Mammary epithelial cell (primary cell): ENCODE measurements at regions of chr3 and their contacts with region 1.

Region 1: DNA sequence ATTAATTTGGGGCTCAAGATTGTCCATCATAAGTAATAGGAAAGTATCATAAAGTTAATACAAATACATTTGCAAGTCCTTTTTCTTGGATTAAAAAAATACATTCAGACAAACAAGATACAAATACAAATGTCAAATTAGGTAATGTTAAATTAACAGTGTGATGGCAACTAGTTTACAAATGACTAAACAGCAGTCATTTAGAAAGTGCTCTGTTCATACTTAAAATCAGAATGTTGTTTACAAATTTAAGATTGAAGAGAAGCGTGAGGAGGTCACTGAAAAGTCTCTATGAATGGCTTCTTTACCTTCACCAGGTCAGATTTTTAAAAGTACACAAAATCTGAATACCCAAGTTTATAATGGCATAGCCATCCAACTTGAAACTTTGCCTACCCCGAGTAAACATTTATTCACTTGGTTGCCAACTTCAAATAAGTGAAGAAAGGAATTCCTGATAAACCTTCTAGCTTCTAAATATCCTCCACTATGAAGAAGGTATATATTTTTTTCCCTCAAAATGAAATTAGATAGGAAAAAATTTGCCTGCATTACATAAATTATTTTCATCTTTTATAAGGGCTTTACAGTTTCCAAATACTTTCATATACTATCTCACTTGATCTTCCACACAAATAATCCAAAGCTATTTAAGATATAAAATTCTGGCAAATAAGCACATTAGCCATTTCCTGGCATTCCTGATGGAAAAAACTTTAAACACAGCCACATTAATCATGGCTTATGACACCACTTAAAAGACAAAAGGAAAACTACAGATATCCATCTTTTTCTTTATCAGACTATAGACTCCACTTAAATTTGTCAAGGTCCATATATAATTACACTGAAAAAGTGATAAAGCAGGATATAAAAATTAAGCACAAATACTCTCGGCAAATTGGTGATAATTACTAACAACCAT is 11.5 kb upstream of the NEK10 start:
- DNase-seq: no peak
- H3K4me3 ChIP-seq: no peak overlapping the region
- H3K27ac ChIP-seq: no peak overlapping the region
- H3K4me1 ChIP-seq: no peaks in the 10 kb centered on the region
- H3K27me3 ChIP-seq: no peaks in the 10 kb centered on the region
- CTCF ChIP-seq: no peak

Region 2: DNA sequence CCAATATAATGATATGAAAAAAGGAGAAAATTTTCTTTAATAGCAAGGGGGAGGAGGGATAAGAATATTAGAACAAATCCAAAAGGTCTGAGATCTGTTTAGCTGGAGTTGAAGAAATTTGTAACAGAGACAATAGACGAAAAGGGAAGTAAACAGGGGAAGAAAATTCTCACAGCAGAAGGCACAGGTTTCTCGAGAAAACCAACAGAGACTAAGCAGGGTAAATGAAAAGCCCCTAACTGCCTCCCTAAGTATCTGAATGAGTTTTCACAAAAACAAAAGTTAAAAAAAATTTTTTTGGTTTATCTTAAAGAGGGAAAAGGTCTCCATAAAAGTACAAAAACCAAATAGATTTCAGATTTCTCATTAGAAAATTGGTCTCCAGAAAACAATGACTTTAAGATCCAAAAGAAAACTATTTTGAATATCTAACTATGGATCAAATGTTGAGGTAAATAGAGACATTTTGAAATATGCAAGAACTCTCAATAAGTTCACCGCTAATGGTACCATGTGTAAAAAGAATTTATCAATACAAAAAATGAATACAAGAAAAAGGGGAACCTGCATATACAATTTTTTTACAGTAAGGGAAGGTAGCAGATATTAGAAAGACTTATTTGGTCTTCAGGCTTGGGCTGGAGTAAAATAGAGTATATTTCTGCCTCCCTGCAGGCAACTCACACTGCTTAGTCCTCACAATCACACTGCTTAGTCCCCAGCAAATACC is 12.4 kb after region 1 on chr3:
- CTCF ChIA-PET with region 1: no interaction called
- dilution Hi-C with region 1: no loop called
- in situ Hi-C with region 1: no loop called
- intact Hi-C with region 1: no loop called
- DNase-seq: no peak
- H3K4me3 ChIP-seq: no peak overlapping the region
- H3K27ac ChIP-seq: no peak overlapping the region
- H3K4me1 ChIP-seq: no peaks in the 10 kb centered on the region
- H3K27me3 ChIP-seq: no peaks in the 10 kb centered on the region
- CTCF ChIP-seq: no peak

Region 3: GRCh38 chr3:27415202-27415601 is 34.5 kb after region 1 on chr3:
- CTCF ChIA-PET with region 1: no interaction called
- dilution Hi-C with region 1: no loop called
- in situ Hi-C with region 1: no loop called
- intact Hi-C with region 1: loop called (anchors 5 kb)
- DNase-seq: no peak
- H3K4me3 ChIP-seq: no peak overlapping the region
- H3K27ac ChIP-seq: no peak overlapping the region
- H3K4me1 ChIP-seq: no peaks in the 10 kb centered on the region
- H3K27me3 ChIP-seq: no peaks in the 10 kb centered on the region
- CTCF ChIP-seq: no peak